Heart left ventricle (tissue), 16 donors: ENCODE measurements at regions of chr6 and their contacts with region 1.

Region 1: DNA sequence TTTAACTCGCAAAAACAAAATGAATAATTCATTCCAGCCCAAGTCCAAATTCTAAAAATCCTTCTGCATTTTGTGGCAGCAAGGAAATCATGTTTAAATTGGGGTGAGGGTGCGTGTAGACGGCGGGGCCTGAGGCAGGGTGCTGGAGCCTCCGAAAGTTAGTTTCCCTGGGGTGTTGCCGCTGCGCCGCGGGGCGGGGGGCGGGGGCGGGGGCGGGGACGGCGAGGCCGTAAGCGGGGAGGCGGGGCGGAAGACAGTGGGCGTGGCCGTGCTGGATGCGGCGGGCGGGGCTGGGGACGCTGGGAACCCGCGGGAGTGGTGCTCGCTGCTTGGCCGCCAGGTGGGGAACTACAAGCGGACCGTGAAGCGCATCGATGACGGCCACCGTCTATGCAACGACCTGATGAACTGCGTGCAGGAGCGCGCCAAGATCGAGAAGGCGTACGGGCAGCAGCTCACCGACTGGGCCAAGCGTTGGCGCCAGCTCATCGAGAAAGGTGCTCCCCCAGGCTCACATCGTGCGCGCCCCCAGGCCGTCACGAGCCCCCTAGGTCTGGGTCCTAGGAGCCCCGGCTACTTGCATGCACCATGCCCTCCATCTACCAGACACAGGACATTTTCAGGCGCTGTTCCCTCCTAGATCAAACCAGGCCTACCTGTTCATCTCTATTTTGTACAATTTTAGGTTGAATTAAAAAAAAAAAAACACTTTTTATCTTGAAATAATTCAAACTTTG is 29.0 kb downstream of the SPDEF start:
- DNase-seq: peak; percentile 95 to 98 (median 96)
- ATAC-seq: peak; percentile 86 to 95 (median 92)
- H3K4me3 ChIP-seq: peak overlapping the region in 10 of 12 donors; percentile 7 to 57 (median 40)
- H3K27ac ChIP-seq: peak overlapping the region in 7 of 12 donors; percentile 47 to 66 (median 56)
- H3K4me1 ChIP-seq: peaks cover 0 to 18% (median 8%) of the 10 kb centered on the region in 12 donors
- H3K27me3 ChIP-seq: no peaks in the 10 kb centered on the region
- CTCF ChIP-seq: peak; percentile 56 to 94 (median 78)
- POLR2A ChIP-seq: no peak

Region 2: DNA sequence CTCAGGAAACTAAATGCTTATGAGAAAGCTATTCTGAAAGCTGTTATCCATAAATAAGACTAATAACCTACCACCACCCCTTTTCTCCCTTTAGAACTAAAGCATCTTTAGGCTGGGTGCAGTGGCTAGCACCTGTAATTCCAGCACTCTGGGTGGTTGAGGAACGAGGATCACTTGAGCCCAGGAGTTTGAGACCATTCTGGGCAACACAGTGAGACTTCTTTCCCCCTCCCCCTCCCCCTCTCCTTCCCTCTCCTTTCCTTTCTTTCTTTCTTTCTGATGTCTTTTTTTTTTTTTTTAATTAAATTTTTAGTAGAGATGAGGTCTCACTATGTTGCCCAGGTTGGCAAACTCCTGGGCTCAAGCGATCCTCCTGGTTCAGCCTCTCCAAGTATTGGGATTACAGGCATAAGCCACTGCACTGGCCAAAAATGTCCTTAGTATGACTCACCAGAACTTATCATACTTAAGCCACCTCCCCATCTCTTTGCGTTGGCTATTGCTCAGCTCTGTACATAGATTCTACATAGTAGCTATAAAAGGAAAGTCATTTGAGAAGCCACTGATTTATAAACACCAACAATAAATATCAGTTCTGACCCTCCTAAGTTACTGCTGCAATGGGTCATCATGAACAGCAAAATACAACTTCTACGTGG is 83.8 kb after region 1 on chr6:
- intact Hi-C with region 1: loop called (anchors 1 to 5 kb)
- DNase-seq: no peak
- ATAC-seq: peak in 2 of 4 donors; percentile 44 to 50
- H3K4me3 ChIP-seq: no peak overlapping the region
- H3K27ac ChIP-seq: peak overlapping the region in 2 of 12 donors; percentile 23 to 28
- H3K4me1 ChIP-seq: peaks cover 0 to 30% (median 18%) of the 10 kb centered on the region in 12 donors
- H3K27me3 ChIP-seq: no peaks in the 10 kb centered on the region
- CTCF ChIP-seq: no peak
- POLR2A ChIP-seq: no peak

Region 3: DNA sequence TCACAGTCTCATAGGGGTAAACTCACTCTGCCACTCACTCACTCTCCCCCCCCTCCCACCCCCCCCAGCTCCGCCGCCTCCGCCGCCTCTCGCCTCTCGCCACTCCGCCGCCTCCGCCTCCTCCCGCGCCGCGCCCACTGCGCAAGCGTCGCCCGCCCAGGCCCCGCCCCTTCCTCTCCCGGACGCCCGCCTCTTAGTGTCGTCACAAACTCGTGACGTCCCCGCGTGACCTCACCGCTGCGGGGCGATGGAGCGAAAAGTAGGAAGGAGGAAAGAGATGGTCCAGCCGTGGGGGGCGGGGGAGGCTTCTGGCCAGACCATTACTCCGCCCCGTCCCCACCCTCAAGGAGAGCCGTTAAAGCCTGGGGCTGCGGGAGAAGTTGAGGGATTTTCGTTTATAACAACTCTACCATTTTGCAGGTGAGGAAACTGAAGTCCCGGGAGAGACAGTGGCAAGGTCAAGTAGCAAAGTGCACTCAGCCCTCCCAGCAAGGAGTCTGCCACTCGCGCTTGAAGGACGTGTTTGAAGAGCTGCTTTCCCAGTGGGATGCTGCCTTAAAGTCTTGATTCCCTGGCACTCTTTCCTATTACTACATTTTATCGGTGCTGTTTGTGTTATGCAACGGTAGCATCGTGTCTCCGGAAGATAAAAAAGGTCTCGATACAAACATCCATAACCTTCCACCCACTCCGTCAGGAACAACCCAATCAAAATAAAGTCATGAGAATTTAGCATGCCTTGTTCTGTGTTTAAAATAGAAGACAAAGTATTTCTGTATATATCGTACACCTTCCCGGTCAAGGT is 169.8 kb after region 1 on chr6 and contains the start of gene ILRUN:
- intact Hi-C with region 1: loop called in 1 of 10 experiments (anchors 10 kb)
- DNase-seq: peak; percentile 96 to 99 (median 98)
- ATAC-seq: peak; percentile 89 to 96 (median 96)
- H3K4me3 ChIP-seq: peak within 1 kb of the TSS; percentile 81 to 99 (median 93)
- H3K27ac ChIP-seq: peak within 1 kb of the TSS; percentile 84 to 99 (median 96)
- H3K4me1 ChIP-seq: peaks cover 7 to 45% (median 29%) of the 10 kb centered on the region in 12 donors
- H3K27me3 ChIP-seq: no peaks in the 10 kb centered on the region
- CTCF ChIP-seq: no peak
- POLR2A ChIP-seq: peak in 1 of 2 donors; percentile 90
- total RNA-seq, gene ILRUN: 91.2 to 191 (median 116) TPM